Mammary epithelial cell (primary cell): ENCODE measurements at regions of chr19 and their contacts with region 1.

Region 1: GRCh38 chr19:21256722-21257121 is 72.5 kb downstream of the ZNF708 start:
- DNase-seq: peak; percentile 43
- H3K4me3 ChIP-seq: no peak overlapping the region
- H3K27ac ChIP-seq: no peak overlapping the region
- H3K4me1 ChIP-seq: no peaks in the 10 kb centered on the region
- H3K27me3 ChIP-seq: no peaks in the 10 kb centered on the region
- CTCF ChIP-seq: peak; percentile 33 to 72

Region 2: DNA sequence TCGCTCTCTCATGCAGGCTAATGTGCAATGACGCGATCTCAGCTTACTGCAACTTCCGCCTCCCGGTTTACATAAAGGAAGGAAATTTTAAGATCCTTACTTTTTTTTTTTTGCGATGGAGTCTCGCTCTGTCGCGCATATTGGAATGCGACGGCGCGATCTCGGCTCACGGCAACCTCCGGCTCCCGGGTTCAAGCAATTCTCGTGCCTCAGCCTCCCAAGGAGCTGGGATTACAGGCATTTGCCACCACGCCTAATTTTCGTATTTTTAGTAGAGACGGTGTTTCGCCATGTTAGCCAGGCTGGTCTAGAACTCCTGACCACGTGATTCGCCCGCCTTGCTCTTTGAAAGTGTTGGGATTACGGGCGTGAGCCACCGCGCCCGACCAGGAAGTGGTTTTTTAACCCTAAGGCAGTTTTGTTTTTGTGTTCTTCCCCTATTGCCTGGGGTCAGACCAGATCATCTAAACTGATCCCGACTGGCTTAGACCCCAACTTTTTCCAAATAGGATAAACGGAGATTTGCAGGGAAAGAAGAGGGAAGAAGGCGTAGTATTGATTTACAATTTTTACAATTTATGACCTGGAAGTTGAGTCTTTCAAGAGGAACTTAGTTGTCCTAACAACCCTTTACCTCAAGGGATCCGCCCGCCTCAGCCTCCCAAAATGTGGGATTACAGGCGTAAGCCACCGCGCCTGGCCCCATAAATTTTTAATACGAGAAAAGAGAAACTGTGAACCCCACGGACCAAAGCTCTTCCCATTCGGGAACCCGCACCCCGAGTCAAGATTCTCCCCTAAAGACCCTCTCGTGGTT is 833.1 kb before region 1 on chr19:
- CTCF ChIA-PET with region 1: no interaction called
- dilution Hi-C with region 1: no loop called
- in situ Hi-C with region 1: no loop called
- intact Hi-C with region 1: loop called (anchors 5 kb)
- DNase-seq: peak; percentile 56
- H3K4me3 ChIP-seq: peak overlapping the region; percentile 43 to 58 (median 52)
- H3K27ac ChIP-seq: peak overlapping the region; percentile 22
- H3K4me1 ChIP-seq: no peaks in the 10 kb centered on the region
- H3K27me3 ChIP-seq: no peaks in the 10 kb centered on the region
- CTCF ChIP-seq: no peak

Region 3: GRCh38 chr19:21092109-21092508 is 164.6 kb before region 1 on chr19:
- CTCF ChIA-PET with region 1: no interaction called
- dilution Hi-C with region 1: no loop called
- in situ Hi-C with region 1: no loop called
- intact Hi-C with region 1: loop called (anchors 1 kb)
- DNase-seq: no peak
- H3K4me3 ChIP-seq: no peak overlapping the region
- H3K27ac ChIP-seq: no peak overlapping the region
- H3K4me1 ChIP-seq: no peaks in the 10 kb centered on the region
- H3K27me3 ChIP-seq: no peaks in the 10 kb centered on the region
- CTCF ChIP-seq: no peak

Region 4: GRCh38 chr19:21117041-21117843 is 139.5 kb before region 1 on chr19:
- CTCF ChIA-PET with region 1: no interaction called
- dilution Hi-C with region 1: no loop called
- in situ Hi-C with region 1: no loop called
- intact Hi-C with region 1: no loop called
- DNase-seq: peak; percentile 51
- H3K4me3 ChIP-seq: no peak overlapping the region
- H3K27ac ChIP-seq: no peak overlapping the region
- H3K4me1 ChIP-seq: no peaks in the 10 kb centered on the region
- H3K27me3 ChIP-seq: no peaks in the 10 kb centered on the region
- CTCF ChIP-seq: no peak

Region 5: GRCh38 chr19:21202865-21203494 is 53.7 kb before region 1 on chr19:
- CTCF ChIA-PET with region 1: interaction called, 3 read pairs
- dilution Hi-C with region 1: no loop called
- in situ Hi-C with region 1: no loop called
- intact Hi-C with region 1: loop called (anchors 1 kb)
- DNase-seq: peak; percentile 38
- H3K4me3 ChIP-seq: no peak overlapping the region
- H3K27ac ChIP-seq: no peak overlapping the region
- H3K4me1 ChIP-seq: no peaks in the 10 kb centered on the region
- H3K27me3 ChIP-seq: no peaks in the 10 kb centered on the region
- CTCF ChIP-seq: peak; percentile 50 to 87